HEK293 (cell line): ENCODE measurements at regions of chrX and their contacts with region 1.

Region 1: DNA sequence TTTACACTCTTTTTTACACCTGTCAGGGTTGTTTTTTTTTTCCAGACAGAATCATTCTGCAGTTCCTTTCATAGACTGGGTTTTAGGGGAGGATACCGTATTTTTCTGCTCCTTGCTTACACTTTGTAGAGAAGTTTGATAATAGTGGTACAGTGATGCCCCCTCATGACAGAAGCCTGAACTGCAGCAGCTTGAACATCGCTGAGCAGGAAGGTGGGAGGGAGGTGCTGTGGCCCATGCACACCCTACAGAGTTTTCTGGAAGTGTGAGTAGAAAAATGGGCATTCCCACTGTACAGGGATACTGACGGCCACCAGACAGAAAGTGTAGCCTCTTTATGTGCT is 54.5 kb downstream of the RAB40A start:
- H3K4me3 ChIP-seq: no peak overlapping the region
- H3K27ac ChIP-seq: no peak overlapping the region
- H3K4me1 ChIP-seq: no peaks in the 10 kb centered on the region
- CTCF ChIP-seq: peak; percentile 67

Region 2: GRCh38 chrX:103211012-103211715 is 253.6 kb before region 1 on chrX:
- CTCF ChIA-PET with region 1: interaction called, 21 read pairs
- POLR2A ChIA-PET with region 1: no interaction called
- H3K4me3 ChIP-seq: no peak overlapping the region
- H3K27ac ChIP-seq: no peak overlapping the region
- H3K4me1 ChIP-seq: no peaks in the 10 kb centered on the region
- CTCF ChIP-seq: 0 out of 2 replicates have a peak, but pooled peaks have one; percentile 13

Region 3: GRCh38 chrX:103343105-103343504 is 121.6 kb before region 1 on chrX:
- CTCF ChIA-PET with region 1: interaction called, 48 read pairs
- POLR2A ChIA-PET with region 1: interaction called, 3 read pairs
- H3K4me3 ChIP-seq: no peak overlapping the region
- H3K27ac ChIP-seq: no peak overlapping the region
- H3K4me1 ChIP-seq: no peaks in the 10 kb centered on the region
- CTCF ChIP-seq: 0 out of 2 replicates have a peak, but pooled peaks have one; percentile 30

Region 4: GRCh38 chrX:103356130-103356798 is 108.5 kb before region 1 on chrX and contains the start of gene TCEAL9:
- CTCF ChIA-PET with region 1: interaction called, 5 read pairs
- POLR2A ChIA-PET with region 1: interaction called, 10 read pairs
- H3K4me3 ChIP-seq: peak within 1 kb of the TSS; percentile 59
- H3K27ac ChIP-seq: peak within 1 kb of the TSS; percentile 53
- H3K4me1 ChIP-seq: no peaks in the 10 kb centered on the region
- CTCF ChIP-seq: no peak

Region 5: GRCh38 chrX:103475381-103475780 is 10.6 kb after region 1 on chrX:
- CTCF ChIA-PET with region 1: interaction called, 13 read pairs
- POLR2A ChIA-PET with region 1: no interaction called
- H3K4me3 ChIP-seq: no peak overlapping the region
- H3K27ac ChIP-seq: no peak overlapping the region
- H3K4me1 ChIP-seq: peaks cover 3% of the 10 kb centered on the region; the same call in 1 of the 2 replicates
- CTCF ChIP-seq: no peak